IMR-90 (cell line): ENCODE measurements at regions of chr21 and their contacts with region 1.

Region 1: DNA sequence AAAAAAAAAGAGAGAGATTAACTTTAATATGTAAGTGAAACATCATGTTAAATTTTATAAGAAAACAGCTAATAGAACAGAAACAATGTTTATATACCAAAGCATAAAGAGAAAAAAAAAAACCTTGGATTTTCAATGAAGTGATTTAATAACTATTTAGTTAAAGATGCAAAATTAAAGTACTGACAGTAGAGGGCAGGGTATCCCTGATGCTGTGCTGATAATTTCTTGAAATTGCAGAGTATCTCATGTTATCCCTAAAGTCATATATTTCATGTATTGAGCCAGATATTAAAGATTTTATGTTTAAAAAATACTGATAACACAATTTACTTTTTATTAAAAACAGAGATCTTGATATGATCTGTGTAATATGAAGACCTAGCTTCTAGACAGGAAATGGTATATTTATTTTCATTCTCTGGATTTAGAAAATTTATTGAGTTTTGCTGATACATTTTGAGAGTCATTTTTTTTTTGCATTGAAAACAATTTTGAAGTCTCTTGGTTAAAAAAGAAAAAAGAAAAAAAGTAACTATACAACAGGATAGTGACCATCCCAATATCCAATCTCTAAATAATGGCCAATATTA is 273.2 kb downstream of the USP25 start:
- DNase-seq: peak; percentile 51
- ATAC-seq: peak; percentile 75; the same call in 1 of the 2 replicates
- H3K4me3 ChIP-seq: no peak overlapping the region
- H3K27ac ChIP-seq: no peak overlapping the region
- H3K4me1 ChIP-seq: no peaks in the 10 kb centered on the region
- H3K27me3 ChIP-seq: no peaks in the 10 kb centered on the region
- CTCF ChIP-seq: peak; percentile 67
- POLR2A ChIP-seq: no peak
- RAD21 ChIP-seq: peak; percentile 67

Region 2: DNA sequence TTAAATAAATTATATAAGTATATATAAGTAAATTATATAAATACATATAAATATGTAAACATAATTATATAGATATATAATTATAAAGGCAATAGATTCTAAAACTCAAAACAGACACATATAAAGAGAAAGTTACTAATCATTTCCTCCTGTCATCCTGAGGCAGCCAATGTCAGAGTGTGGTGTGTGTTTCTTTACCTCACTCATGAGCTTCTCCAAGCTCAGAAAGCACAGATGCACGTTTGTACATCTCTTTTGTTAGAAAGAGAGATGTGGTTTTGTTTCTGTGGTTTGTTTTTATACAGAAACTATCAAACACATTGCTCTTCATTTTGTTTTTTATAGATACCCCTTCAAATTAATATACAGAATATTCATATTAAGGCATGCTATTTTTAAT is 321.7 kb after region 1 on chr21:
- CTCF ChIA-PET with region 1: no interaction called
- POLR2A ChIA-PET with region 1: no interaction called
- dilution Hi-C with region 1: no loop called
- in situ Hi-C with region 1: loop called (anchors 5 kb)
- intact Hi-C with region 1: no loop called
- DNase-seq: no peak
- ATAC-seq: no peak
- H3K4me3 ChIP-seq: no peak overlapping the region
- H3K27ac ChIP-seq: no peak overlapping the region
- H3K4me1 ChIP-seq: no peaks in the 10 kb centered on the region
- H3K27me3 ChIP-seq: no peaks in the 10 kb centered on the region
- CTCF ChIP-seq: no peak
- POLR2A ChIP-seq: no peak
- RAD21 ChIP-seq: no peak